ENCODE measurements at regions of chr2 and their contacts with region 1.

Region 1: GRCh38 chr2:37324786-37325624 is at the start of gene PRKD3:
- DNase-seq: peak; percentile 70 to 74 (median 73)
- H3K4me3 ChIP-seq: peak within 1 kb of the TSS; percentile 72 to 85
- H3K4me3 Mint-ChIP-seq: peak within 1 kb of the TSS; percentile 97 to 99 (median 98)
- H3K27ac ChIP-seq: peak within 1 kb of the TSS; percentile 39
- H3K27ac Mint-ChIP-seq: peak within 1 kb of the TSS; percentile 93 to 98 (median 98)
- H3K4me1 ChIP-seq: peaks cover 36% of the 10 kb centered on the region
- H3K4me1 Mint-ChIP-seq: peaks cover 19 to 44% (median 27%) of the 10 kb centered on the region in 4 donors
- H3K27me3 ChIP-seq: no peaks in the 10 kb centered on the region
- H3K27me3 Mint-ChIP-seq: peaks cover 6 to 8% of the 10 kb centered on the region in 2 donors
- total RNA-seq, gene PRKD3: 34.6 to 37.7 TPM

Region 2: DNA sequence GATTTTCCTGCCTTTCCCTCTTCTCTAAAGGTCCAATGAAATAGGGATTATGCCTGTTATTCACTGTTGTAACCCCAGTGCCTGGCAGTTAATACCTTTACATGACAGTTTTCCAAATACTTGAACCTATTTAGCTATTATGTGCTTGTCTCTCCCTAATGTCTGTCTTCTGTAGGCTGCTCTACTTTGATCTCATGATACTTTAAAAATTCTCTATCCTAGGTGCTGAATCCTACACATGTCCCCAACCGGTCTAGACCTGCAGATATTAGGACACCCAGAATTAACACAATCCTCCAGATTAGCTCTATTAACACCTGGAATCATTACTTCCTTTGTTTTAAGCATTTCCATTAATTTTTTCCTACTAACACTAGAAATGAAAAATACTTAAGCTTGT is 100.9 kb before region 1 on chr2:
- CTCF ChIA-PET with region 1: no interaction called
- POLR2A ChIA-PET with region 1: no interaction called
- intact Hi-C with region 1: no loop called
- DNase-seq: no peak
- H3K4me3 ChIP-seq: no peak overlapping the region
- H3K4me3 Mint-ChIP-seq: no peak overlapping the region
- H3K27ac ChIP-seq: no peak overlapping the region
- H3K27ac Mint-ChIP-seq: peak overlapping the region in 1 of 7 donors; percentile 59
- H3K4me1 ChIP-seq: peaks cover 35% of the 10 kb centered on the region
- H3K4me1 Mint-ChIP-seq: peaks cover 36 to 59% (median 48%) of the 10 kb centered on the region in 4 donors
- H3K27me3 ChIP-seq: no peaks in the 10 kb centered on the region
- H3K27me3 Mint-ChIP-seq: no peaks in the 10 kb centered on the region

Region 3: GRCh38 chr2:37344453-37345361 is 19.7 kb after region 1 on chr2 and contains the start of gene QPCT:
- CTCF ChIA-PET with region 1: interaction called, 4 read pairs
- POLR2A ChIA-PET with region 1: interaction called, 4 read pairs
- intact Hi-C with region 1: loop called (anchors 1 kb)
- DNase-seq: peak; percentile 36 to 80 (median 50)
- H3K4me3 ChIP-seq: peak within 1 kb of the TSS; percentile 27 to 51
- H3K4me3 Mint-ChIP-seq: peak within 1 kb of the TSS; percentile 62 to 88 (median 84)
- H3K27ac ChIP-seq: no peak within 1 kb of the TSS
- H3K27ac Mint-ChIP-seq: peak within 1 kb of the TSS in 6 of 7 donors; percentile 24 to 75 (median 49)
- H3K4me1 ChIP-seq: peaks cover 12% of the 10 kb centered on the region
- H3K4me1 Mint-ChIP-seq: peaks cover 7 to 12% (median 10%) of the 10 kb centered on the region in 4 donors
- H3K27me3 ChIP-seq: no peaks in the 10 kb centered on the region
- H3K27me3 Mint-ChIP-seq: peaks cover 2 to 5% of the 10 kb centered on the region in 2 donors
- total RNA-seq, gene QPCT: 1.2 to 1.4 TPM